ENCODE measurements at regions of chr1 and their contacts with region 1.

Region 1: GRCh38 chr1:182588500-182589452 is at the start of gene RNASEL:
- DNase-seq: peak; percentile 60 to 77 (median 71)
- H3K4me3 ChIP-seq: peak within 1 kb of the TSS; percentile 93 to 94
- H3K4me3 Mint-ChIP-seq: peak within 1 kb of the TSS; percentile 93 to 99 (median 96)
- H3K27ac ChIP-seq: peak within 1 kb of the TSS; percentile 98
- H3K27ac Mint-ChIP-seq: peak within 1 kb of the TSS; percentile 96 to 100 (median 99)
- H3K4me1 ChIP-seq: peaks cover 48% of the 10 kb centered on the region
- H3K4me1 Mint-ChIP-seq: peaks cover 36 to 61% (median 46%) of the 10 kb centered on the region in 4 donors
- H3K27me3 ChIP-seq: no peaks in the 10 kb centered on the region
- H3K27me3 Mint-ChIP-seq: no peaks in the 10 kb centered on the region
- total RNA-seq, gene RNASEL: 33.9 to 35.4 TPM

Region 2: DNA sequence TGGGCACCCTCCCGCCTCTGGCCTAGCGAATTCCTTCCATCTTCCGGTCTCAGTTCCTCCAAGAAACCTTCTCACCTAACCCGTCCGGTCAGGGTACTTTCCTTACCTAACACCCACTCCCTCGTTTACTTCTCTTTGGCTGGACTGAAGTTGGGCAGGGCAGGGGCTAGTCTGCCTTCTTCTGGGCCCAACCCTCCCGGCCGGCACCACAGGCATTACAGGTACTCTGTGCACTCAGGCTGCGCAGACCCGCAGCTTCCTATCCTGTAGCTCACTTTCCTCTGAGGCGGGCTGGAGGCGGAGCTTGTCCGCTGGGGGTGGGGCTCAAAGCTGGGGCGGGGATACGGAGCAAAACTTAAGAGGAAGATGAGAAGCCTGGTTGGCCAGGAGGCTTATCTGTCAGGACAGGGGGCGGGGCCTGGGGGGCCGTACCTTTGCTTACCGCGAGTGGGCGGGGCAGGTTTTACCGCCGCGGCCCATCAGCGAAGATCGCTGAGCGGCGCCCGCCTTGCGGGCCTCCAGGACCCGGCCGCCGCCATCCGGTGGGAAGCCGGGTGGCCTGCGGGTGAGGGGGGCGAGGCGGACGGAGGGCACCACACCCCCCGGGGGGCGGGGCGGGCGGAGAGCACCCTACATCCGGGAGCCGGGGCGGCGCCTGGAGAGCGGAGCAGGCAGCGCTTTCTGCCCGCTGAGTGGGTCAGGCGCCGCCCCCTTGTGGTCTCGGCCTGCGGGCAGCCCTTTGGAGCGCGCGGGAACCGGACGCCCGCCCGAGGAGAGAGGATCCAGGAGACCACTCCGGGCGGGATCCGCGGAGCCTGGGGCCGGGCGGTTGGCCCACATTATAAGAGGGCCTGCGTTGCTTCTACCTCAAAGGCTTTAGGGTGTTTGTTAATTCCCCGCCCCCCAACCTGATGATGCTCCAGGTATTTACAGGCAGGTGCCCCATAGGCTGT is 559.1 kb before region 1 on chr1:
- CTCF ChIA-PET with region 1: no interaction called
- POLR2A ChIA-PET with region 1: interaction called, 3 read pairs
- intact Hi-C with region 1: loop called (anchors 2 kb)
- DNase-seq: peak; percentile 98
- H3K4me3 ChIP-seq: peak overlapping the region; percentile 92 to 94
- H3K4me3 Mint-ChIP-seq: peak overlapping the region; percentile 91 to 100 (median 96)
- H3K27ac ChIP-seq: peak overlapping the region; percentile 77
- H3K27ac Mint-ChIP-seq: peak overlapping the region; percentile 84 to 100 (median 99)
- H3K4me1 ChIP-seq: peaks cover 16% of the 10 kb centered on the region
- H3K4me1 Mint-ChIP-seq: peaks cover 14 to 21% (median 16%) of the 10 kb centered on the region in 4 donors
- H3K27me3 ChIP-seq: no peaks in the 10 kb centered on the region
- H3K27me3 Mint-ChIP-seq: no peaks in the 10 kb centered on the region

Region 3: DNA sequence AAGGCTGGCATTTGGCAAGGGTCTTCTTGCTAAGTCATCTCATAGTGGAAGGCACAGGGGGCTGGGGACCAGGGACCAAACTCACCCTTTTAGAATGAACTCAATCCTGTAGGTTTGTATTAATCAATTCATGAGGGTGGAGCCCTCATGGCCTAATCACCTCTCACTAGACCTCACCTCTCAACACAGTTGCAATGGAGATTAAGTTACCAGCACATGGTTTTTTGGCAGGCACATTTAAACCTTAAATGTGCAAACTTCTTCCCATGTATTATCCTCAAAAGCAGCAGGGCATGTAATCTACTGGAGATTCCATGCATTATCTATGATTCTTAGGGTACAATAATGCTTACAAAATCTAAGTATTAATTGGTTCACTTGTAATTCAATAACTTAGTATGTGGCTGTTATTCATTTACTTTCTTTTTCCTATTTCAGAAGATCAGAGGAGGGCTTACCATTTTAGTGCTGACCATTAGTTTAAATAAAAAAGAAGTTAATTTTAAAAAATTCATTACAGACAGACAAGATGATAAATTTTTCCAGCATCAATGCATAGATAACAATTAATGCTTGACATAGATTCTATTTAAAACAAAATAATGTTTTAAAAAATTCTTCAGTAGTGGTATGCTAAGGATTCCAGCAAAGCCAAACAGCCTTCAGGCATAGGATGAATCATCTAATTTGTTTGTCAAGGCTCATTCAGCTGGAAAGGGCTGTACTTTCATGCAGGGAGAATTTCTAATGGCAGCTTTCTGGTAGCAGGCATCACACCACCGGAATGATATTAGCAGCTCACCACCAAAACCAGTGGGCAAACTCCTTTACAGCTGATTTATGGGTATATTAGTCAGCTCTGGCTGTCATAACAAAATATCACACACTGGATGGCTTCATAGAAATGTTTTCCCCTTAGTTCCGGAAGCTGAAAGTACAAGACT is 402.7 kb before region 1 on chr1:
- CTCF ChIA-PET with region 1: no interaction called
- POLR2A ChIA-PET with region 1: no interaction called
- intact Hi-C with region 1: no loop called
- DNase-seq: no peak
- H3K4me3 ChIP-seq: no peak overlapping the region
- H3K4me3 Mint-ChIP-seq: no peak overlapping the region
- H3K27ac ChIP-seq: no peak overlapping the region
- H3K27ac Mint-ChIP-seq: no peak overlapping the region
- H3K4me1 ChIP-seq: no peaks in the 10 kb centered on the region
- H3K4me1 Mint-ChIP-seq: peaks cover 0 to 2% (median 0%) of the 10 kb centered on the region in 4 donors
- H3K27me3 ChIP-seq: no peaks in the 10 kb centered on the region
- H3K27me3 Mint-ChIP-seq: peaks cover 9 to 11% of the 10 kb centered on the region in 2 donors

Region 4: GRCh38 chr1:182614796-182615454 is 26.1 kb after region 1 on chr1:
- CTCF ChIA-PET with region 1: interaction called, 3 read pairs
- POLR2A ChIA-PET with region 1: interaction called, 31 read pairs
- intact Hi-C with region 1: no loop called
- DNase-seq: peak in 4 of 5 donors; percentile 33 to 60 (median 34)
- H3K4me3 ChIP-seq: peak overlapping the region; percentile 46 to 73
- H3K4me3 Mint-ChIP-seq: peak overlapping the region; percentile 79 to 90 (median 86)
- H3K27ac ChIP-seq: peak overlapping the region; percentile 0
- H3K27ac Mint-ChIP-seq: peak overlapping the region; percentile 76 to 96 (median 95)
- H3K4me1 ChIP-seq: peaks cover 41% of the 10 kb centered on the region
- H3K4me1 Mint-ChIP-seq: peaks cover 30 to 47% (median 33%) of the 10 kb centered on the region in 4 donors
- H3K27me3 ChIP-seq: no peaks in the 10 kb centered on the region
- H3K27me3 Mint-ChIP-seq: peaks cover 2 to 15% of the 10 kb centered on the region in 2 donors

Region 5: GRCh38 chr1:182789138-182790076 is 200.6 kb after region 1 on chr1 and contains the start of gene NPL:
- CTCF ChIA-PET with region 1: interaction called, 707 read pairs
- POLR2A ChIA-PET with region 1: interaction called, 29 read pairs
- intact Hi-C with region 1: no loop called
- DNase-seq: peak; percentile 86 to 89 (median 88)
- H3K4me3 ChIP-seq: peak within 1 kb of the TSS; percentile 69 to 88
- H3K4me3 Mint-ChIP-seq: peak within 1 kb of the TSS; percentile 89 to 94 (median 92)
- H3K27ac ChIP-seq: peak within 1 kb of the TSS; percentile 67
- H3K27ac Mint-ChIP-seq: peak within 1 kb of the TSS; percentile 78 to 92 (median 90)
- H3K4me1 ChIP-seq: peaks cover 13% of the 10 kb centered on the region
- H3K4me1 Mint-ChIP-seq: peaks cover 10 to 16% (median 11%) of the 10 kb centered on the region in 4 donors
- H3K27me3 ChIP-seq: no peaks in the 10 kb centered on the region
- H3K27me3 Mint-ChIP-seq: no peaks in the 10 kb centered on the region
- total RNA-seq, gene NPL: 9.6 TPM